Caco-2 (cell line): ENCODE measurements at regions of chr17 and their contacts with region 1.

Region 1: GRCh38 chr17:27494192-27495091 is 38.2 kb downstream of the KSR1 start:
- DNase-seq: peak; percentile 92 to 94
- H3K4me3 ChIP-seq: peak overlapping the region; percentile 32
- H3K4me3 Mint-ChIP-seq: peak overlapping the region; percentile 82
- H3K27ac Mint-ChIP-seq: peak overlapping the region; percentile 92
- H3K4me1 ChIP-seq: peaks cover 73% of the 10 kb centered on the region
- H3K4me1 Mint-ChIP-seq: peaks cover 75% of the 10 kb centered on the region
- H3K27me3 ChIP-seq: no peaks in the 10 kb centered on the region
- H3K27me3 Mint-ChIP-seq: no peaks in the 10 kb centered on the region
- CTCF ChIP-seq: peak; percentile 88 to 99

Region 2: GRCh38 chr17:27353461-27354050 is 140.9 kb before region 1 on chr17:
- CTCF ChIA-PET with region 1: no interaction called
- POLR2A ChIA-PET with region 1: no interaction called
- intact Hi-C with region 1: loop called (anchors 5 kb)
- DNase-seq: peak; percentile 94 to 96
- H3K4me3 ChIP-seq: peak overlapping the region; percentile 93
- H3K4me3 Mint-ChIP-seq: peak overlapping the region; percentile 98
- H3K27ac Mint-ChIP-seq: peak overlapping the region; percentile 99
- H3K4me1 ChIP-seq: peaks cover 9% of the 10 kb centered on the region; the same call in 1 of the 2 replicates
- H3K4me1 Mint-ChIP-seq: no peaks in the 10 kb centered on the region
- H3K27me3 ChIP-seq: no peaks in the 10 kb centered on the region
- H3K27me3 Mint-ChIP-seq: no peaks in the 10 kb centered on the region
- CTCF ChIP-seq: peak; percentile 55 to 96

Region 3: GRCh38 chr17:27506348-27507231 is 12.1 kb after region 1 on chr17:
- CTCF ChIA-PET with region 1: interaction called, 13 read pairs
- POLR2A ChIA-PET with region 1: interaction called, 4 read pairs
- intact Hi-C with region 1: loop called (anchors 1 kb)
- DNase-seq: peak; percentile 83 to 90
- H3K4me3 ChIP-seq: no peak overlapping the region
- H3K4me3 Mint-ChIP-seq: peak overlapping the region; percentile 50
- H3K27ac Mint-ChIP-seq: peak overlapping the region; percentile 91
- H3K4me1 ChIP-seq: peaks cover 48% of the 10 kb centered on the region
- H3K4me1 Mint-ChIP-seq: peaks cover 43% of the 10 kb centered on the region
- H3K27me3 ChIP-seq: no peaks in the 10 kb centered on the region
- H3K27me3 Mint-ChIP-seq: no peaks in the 10 kb centered on the region
- CTCF ChIP-seq: peak in 1 of 2 experiments; percentile 10

Region 4: DNA sequence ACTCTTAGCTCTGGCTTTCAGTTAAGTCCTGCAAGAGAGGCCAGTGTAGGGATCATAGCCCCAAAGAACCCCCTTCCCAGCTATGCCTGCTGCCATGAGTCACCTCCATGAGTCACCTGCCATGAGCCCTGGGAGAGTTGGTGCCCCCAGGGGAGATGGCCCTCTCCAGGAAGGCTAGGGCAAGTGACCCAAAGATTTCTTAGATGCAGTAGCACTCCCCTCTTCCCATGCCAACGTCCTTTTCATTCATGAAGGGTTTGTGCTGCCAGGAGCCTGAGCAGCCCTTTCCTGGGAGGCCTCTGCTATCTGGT is 58.0 kb after region 1 on chr17:
- CTCF ChIA-PET with region 1: interaction called, 8 read pairs
- POLR2A ChIA-PET with region 1: no interaction called
- intact Hi-C with region 1: loop called (anchors 1 kb)
- DNase-seq: peak; percentile 69 to 83
- H3K4me3 ChIP-seq: no peak overlapping the region
- H3K4me3 Mint-ChIP-seq: peak overlapping the region; percentile 18
- H3K27ac Mint-ChIP-seq: peak overlapping the region; percentile 86
- H3K4me1 ChIP-seq: peaks cover 47% of the 10 kb centered on the region
- H3K4me1 Mint-ChIP-seq: peaks cover 39% of the 10 kb centered on the region
- H3K27me3 ChIP-seq: no peaks in the 10 kb centered on the region
- H3K27me3 Mint-ChIP-seq: no peaks in the 10 kb centered on the region
- CTCF ChIP-seq: no peak

Region 5: GRCh38 chr17:27569257-27569722 is 74.8 kb after region 1 on chr17:
- CTCF ChIA-PET with region 1: interaction called, 6 read pairs
- POLR2A ChIA-PET with region 1: no interaction called
- intact Hi-C with region 1: loop called (anchors 1 kb)
- DNase-seq: peak; percentile 89
- H3K4me3 ChIP-seq: no peak overlapping the region
- H3K4me3 Mint-ChIP-seq: no peak overlapping the region
- H3K27ac Mint-ChIP-seq: peak overlapping the region; percentile 83
- H3K4me1 ChIP-seq: peaks cover 54% of the 10 kb centered on the region
- H3K4me1 Mint-ChIP-seq: peaks cover 42% of the 10 kb centered on the region
- H3K27me3 ChIP-seq: no peaks in the 10 kb centered on the region
- H3K27me3 Mint-ChIP-seq: no peaks in the 10 kb centered on the region
- CTCF ChIP-seq: peak; percentile 97 to 98

Region 6: GRCh38 chr17:27593232-27593856 is 98.9 kb after region 1 on chr17:
- CTCF ChIA-PET with region 1: interaction called, 13 read pairs
- POLR2A ChIA-PET with region 1: no interaction called
- intact Hi-C with region 1: no loop called
- DNase-seq: peak in 1 of 2 experiments; percentile 55
- H3K4me3 ChIP-seq: no peak overlapping the region
- H3K4me3 Mint-ChIP-seq: no peak overlapping the region
- H3K27ac Mint-ChIP-seq: no peak overlapping the region
- H3K4me1 ChIP-seq: no peaks in the 10 kb centered on the region; the same call in 1 of the 2 replicates
- H3K4me1 Mint-ChIP-seq: no peaks in the 10 kb centered on the region
- H3K27me3 ChIP-seq: no peaks in the 10 kb centered on the region
- H3K27me3 Mint-ChIP-seq: no peaks in the 10 kb centered on the region
- CTCF ChIP-seq: peak in 1 of 2 experiments; percentile 55

Region 7: DNA sequence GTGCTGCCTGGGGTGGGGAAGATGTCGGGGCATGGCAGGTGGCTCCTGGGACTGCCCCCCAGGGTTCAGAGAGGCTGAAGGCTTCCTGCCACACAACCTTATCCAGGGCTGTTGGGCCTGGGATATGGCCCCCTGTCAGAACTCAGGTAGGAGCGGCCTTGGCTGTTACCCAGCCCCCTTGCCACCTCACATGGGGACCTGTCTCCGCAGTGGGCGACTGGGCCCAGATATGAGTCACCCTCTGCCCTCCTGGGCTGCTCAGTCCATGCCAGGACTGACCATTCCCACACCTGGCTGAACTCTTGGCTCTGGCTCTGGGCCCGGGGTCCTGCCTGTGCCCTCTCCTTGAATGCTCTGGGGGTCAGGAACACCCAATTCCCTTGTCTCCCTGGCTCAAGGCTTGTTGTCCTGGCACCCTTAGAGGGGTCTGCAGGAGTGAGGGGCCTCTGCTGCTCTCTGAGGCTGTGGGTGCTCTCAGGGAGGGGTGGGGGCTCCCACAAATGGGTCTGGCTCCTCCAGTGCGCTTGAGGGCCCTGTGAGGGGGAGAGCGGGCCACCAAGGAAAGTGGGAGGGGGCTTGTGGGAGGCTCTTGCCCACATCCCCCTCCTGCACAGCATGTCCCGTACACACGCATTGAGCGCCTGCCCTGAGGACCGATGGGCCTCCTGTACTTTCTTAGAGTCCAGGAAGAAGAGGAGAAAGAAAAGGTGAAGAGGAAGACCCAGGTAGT is 172.6 kb after region 1 on chr17:
- CTCF ChIA-PET with region 1: no interaction called
- POLR2A ChIA-PET with region 1: no interaction called
- intact Hi-C with region 1: no loop called
- DNase-seq: peak in 1 of 2 experiments; percentile 43
- H3K4me3 ChIP-seq: no peak overlapping the region
- H3K4me3 Mint-ChIP-seq: no peak overlapping the region
- H3K27ac Mint-ChIP-seq: no peak overlapping the region
- H3K4me1 ChIP-seq: no peaks in the 10 kb centered on the region
- H3K4me1 Mint-ChIP-seq: no peaks in the 10 kb centered on the region
- H3K27me3 ChIP-seq: 0 out of 2 replicates have a peak, but pooled peaks cover 1% of the 10 kb centered on the region
- H3K27me3 Mint-ChIP-seq: peaks cover 6% of the 10 kb centered on the region
- CTCF ChIP-seq: no peak

Region 8: DNA sequence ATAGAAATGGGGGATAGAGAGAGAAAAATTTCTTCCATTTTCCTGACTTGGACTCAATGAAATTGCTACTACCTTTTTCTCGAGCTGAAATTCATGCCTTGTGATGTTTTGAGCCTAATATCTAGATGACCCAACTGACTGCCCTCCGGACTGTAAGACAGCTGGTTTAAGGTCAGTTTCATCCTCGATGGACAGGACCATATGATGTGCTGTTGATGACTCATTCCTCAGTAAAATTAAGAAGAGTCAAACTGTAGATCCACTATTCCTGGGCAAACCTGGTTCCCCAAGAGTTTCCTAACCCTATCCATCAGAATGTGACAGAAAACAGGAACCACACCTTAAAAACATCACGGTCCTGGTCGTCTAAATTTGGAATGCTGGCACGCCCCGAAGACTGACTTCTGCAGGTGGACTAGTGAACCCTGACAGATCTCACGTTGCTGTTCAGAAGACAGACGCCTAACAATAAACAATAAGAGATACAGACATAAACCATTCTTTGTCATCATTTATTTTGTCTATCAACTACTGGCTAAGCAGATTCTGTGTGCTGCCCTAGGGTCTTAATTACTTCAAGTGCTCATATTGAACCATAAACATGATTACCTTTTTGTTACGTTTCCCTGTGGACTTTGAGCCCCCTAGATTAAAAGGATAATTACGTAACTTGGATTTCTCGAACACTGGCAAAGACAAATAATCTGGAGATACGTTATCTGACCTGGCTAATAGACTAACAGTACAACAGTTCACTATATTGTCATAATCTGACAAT is 351.0 kb after region 1 on chr17:
- CTCF ChIA-PET with region 1: no interaction called
- POLR2A ChIA-PET with region 1: no interaction called
- intact Hi-C with region 1: loop called (anchors 1 kb)
- DNase-seq: peak; percentile 87 to 94
- H3K4me3 ChIP-seq: no peak overlapping the region
- H3K4me3 Mint-ChIP-seq: peak overlapping the region; percentile 58
- H3K27ac Mint-ChIP-seq: peak overlapping the region; percentile 93
- H3K4me1 ChIP-seq: peaks cover 28% of the 10 kb centered on the region
- H3K4me1 Mint-ChIP-seq: peaks cover 18% of the 10 kb centered on the region
- H3K27me3 ChIP-seq: no peaks in the 10 kb centered on the region
- H3K27me3 Mint-ChIP-seq: no peaks in the 10 kb centered on the region
- CTCF ChIP-seq: no peak